ENCODE measurements at regions of chr3 and their contacts with region 1.

Region 1: DNA sequence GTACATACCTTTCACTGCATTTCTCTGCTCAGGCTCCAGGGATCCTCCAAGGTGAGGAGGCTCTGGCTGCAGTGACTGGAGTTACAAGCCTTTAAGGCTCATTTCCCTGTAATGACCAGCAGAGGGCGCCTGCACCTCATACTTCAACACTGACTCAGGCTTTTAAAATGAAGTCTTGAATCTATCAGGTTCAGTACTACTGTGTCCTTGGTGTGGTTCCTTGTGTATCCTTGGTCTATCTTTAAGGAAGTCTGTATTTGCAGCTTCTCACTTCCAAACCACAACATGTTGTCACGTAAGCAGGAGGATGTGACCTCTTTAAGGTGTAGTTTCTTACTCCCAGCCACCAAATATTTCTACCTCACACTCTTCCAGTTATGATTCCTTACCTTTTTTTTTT is 122.5 kb upstream of the ZBED2 start:
- DNase-seq: peak; percentile 77 to 90 (median 89)
- H3K4me3 ChIP-seq: no peak overlapping the region
- H3K27ac ChIP-seq: no peak overlapping the region
- H3K4me1 ChIP-seq: no peaks in the 10 kb centered on the region
- H3K27me3 ChIP-seq: no peaks in the 10 kb centered on the region

Region 2: GRCh38 chr3:111691293-111691909 is 26.2 kb before region 1 on chr3:
- CTCF ChIA-PET with region 1: interaction called, 47 read pairs
- POLR2A ChIA-PET with region 1: no interaction called
- DNase-seq: peak; percentile 60 to 72 (median 67)
- H3K4me3 ChIP-seq: no peak overlapping the region
- H3K27ac ChIP-seq: no peak overlapping the region
- H3K4me1 ChIP-seq: peaks cover 0 to 19% (median 3%) of the 10 kb centered on the region in 4 experiments
- H3K27me3 ChIP-seq: no peaks in the 10 kb centered on the region

Region 3: GRCh38 chr3:111859974-111860859 is 142.6 kb after region 1 on chr3:
- CTCF ChIA-PET with region 1: interaction called, 60 read pairs
- POLR2A ChIA-PET with region 1: no interaction called
- DNase-seq: peak; percentile 83 to 90 (median 86)
- H3K4me3 ChIP-seq: peak overlapping the region; percentile 47 to 96 (median 81)
- H3K27ac ChIP-seq: peak overlapping the region in 1 of 2 experiments; percentile 32
- H3K4me1 ChIP-seq: peaks cover 4 to 24% (median 19%) of the 10 kb centered on the region in 4 experiments
- H3K27me3 ChIP-seq: peaks cover 0 to 10% (median 3%) of the 10 kb centered on the region in 5 experiments

Region 4: GRCh38 chr3:111910806-111911205 is 193.2 kb after region 1 on chr3:
- CTCF ChIA-PET with region 1: no interaction called
- POLR2A ChIA-PET with region 1: no interaction called
- DNase-seq: peak in 2 of 3 donors; percentile 36 to 37
- H3K4me3 ChIP-seq: no peak overlapping the region
- H3K27ac ChIP-seq: no peak overlapping the region
- H3K4me1 ChIP-seq: peaks cover 0 to 17% (median 2%) of the 10 kb centered on the region in 4 experiments
- H3K27me3 ChIP-seq: no peaks in the 10 kb centered on the region

Region 5: GRCh38 chr3:111967651-111968274 is 250.2 kb after region 1 on chr3:
- CTCF ChIA-PET with region 1: interaction called, 204 read pairs
- POLR2A ChIA-PET with region 1: no interaction called
- DNase-seq: peak; percentile 81 to 91 (median 84)
- H3K4me3 ChIP-seq: peak overlapping the region in 1 of 7 experiments; percentile 19
- H3K27ac ChIP-seq: peak overlapping the region in 1 of 2 experiments; percentile 17
- H3K4me1 ChIP-seq: peaks cover 0 to 8% (median 4%) of the 10 kb centered on the region in 4 experiments
- H3K27me3 ChIP-seq: no peaks in the 10 kb centered on the region

Region 6: GRCh38 chr3:112013058-112013783 is 295.6 kb after region 1 on chr3:
- CTCF ChIA-PET with region 1: interaction called, 44 read pairs
- POLR2A ChIA-PET with region 1: no interaction called
- DNase-seq: peak; percentile 65 to 79 (median 74)
- H3K4me3 ChIP-seq: peak overlapping the region in 2 of 7 experiments; percentile 8 to 26
- H3K27ac ChIP-seq: no peak overlapping the region
- H3K4me1 ChIP-seq: peaks cover 0 to 10% (median 2%) of the 10 kb centered on the region in 4 experiments
- H3K27me3 ChIP-seq: no peaks in the 10 kb centered on the region